Posterior cingulate gyrus (tissue), 11 donors: ENCODE measurements at regions of chr3 and their contacts with region 1.

Region 1: GRCh38 chr3:22117751-22118346 is 366.8 kb upstream of the ZNF385D start:
- DNase-seq: no peak

Region 2: DNA sequence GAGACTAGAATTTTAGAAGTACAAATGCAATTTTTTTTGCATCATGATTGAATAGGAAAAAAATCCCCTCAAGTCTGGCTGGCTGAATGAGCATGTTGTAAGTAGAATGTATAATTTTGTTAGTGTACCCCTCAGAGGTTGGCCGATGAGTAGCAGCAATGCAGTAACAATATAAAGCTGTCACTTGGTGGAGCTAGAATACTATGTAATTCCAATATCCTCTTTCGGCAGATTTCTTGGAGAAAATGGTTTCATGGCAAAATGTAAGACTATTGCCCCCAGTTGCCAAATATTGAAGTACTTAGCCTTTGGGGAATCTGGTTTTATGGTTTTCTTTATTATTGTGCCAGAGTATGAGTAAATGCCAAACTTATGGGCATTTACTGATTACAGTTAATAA is 1892.1 kb before region 1 on chr3:
- intact Hi-C with region 1: loop called (anchors 5 kb)
- DNase-seq: no peak

Region 3: GRCh38 chr3:20340324-20340928 is 1777.4 kb before region 1 on chr3:
- intact Hi-C with region 1: loop called (anchors 5 kb)
- DNase-seq: peak in 9 of 10 donors; percentile 26 to 93 (median 67)

Region 4: GRCh38 chr3:20511863-20512505 is 1605.9 kb before region 1 on chr3:
- intact Hi-C with region 1: loop called (anchors 5 kb)
- DNase-seq: peak in 2 of 10 donors; percentile 29 to 32

Region 5: GRCh38 chr3:21752749-21753347 is 365.0 kb before region 1 on chr3:
- intact Hi-C with region 1: loop called (anchors 5 kb)
- DNase-seq: no peak